ENCODE measurements at regions of chr3 and their contacts with region 1.

Region 1: DNA sequence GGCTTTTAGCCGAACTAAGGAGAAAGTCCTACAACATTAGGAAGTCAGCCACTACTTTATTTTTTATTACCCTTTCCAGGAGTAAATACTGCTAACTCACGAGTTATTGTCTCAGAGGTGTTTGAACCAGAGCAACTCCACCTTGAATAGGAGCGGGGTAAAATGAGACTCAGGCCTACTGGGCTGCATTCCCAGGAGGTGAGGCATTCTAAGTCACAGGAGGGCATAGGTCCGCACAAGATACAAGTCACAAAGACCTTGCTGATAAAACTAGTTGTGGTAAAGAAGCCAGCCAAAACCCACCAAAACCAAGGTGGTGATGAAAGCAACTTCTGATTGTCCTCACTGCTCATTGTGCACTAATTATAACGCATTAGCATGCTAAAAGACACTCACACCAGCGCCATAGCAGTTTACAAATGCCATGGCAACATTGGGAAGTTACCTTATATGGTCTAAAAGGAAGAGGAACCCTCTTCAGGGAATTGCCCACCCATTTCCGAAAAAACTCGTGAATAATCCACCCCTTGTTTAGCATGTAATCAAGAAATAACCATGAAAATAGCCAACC is 555.9 kb downstream of the IGSF11 start:
- DNase-seq: no peak
- ATAC-seq: no peak
- H3K4me3 ChIP-seq: no peak overlapping the region
- H3K27ac ChIP-seq: no peak overlapping the region
- H3K4me1 ChIP-seq: no peaks in the 10 kb centered on the region
- H3K27me3 ChIP-seq: no peaks in the 10 kb centered on the region
- CTCF ChIP-seq: no peak
- POLR2A ChIP-seq: no peak

Region 2: DNA sequence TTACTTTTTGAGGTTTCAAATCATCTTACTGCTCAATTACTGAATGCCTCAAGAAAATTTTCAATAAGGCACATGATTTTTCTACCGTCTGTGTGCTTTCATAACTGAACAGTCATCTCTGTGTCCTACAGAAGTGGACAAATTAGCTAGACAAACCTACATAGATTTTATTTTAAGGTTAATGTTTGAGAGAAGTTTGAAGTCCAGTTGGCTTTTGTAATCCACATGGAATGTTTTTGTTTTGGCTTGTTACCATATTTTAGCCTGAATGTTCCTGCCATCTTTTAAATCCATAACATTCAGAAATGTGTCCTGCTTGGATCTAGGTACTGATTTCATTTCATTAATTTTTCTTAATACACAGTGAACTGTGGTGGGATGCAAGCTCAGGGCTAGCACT is 174.2 kb before region 1 on chr3:
- intact Hi-C with region 1: loop called in 1 of 10 experiments (anchors 5 kb)
- DNase-seq: no peak
- ATAC-seq: no peak
- H3K4me3 ChIP-seq: no peak overlapping the region
- H3K27ac ChIP-seq: no peak overlapping the region
- H3K4me1 ChIP-seq: no peaks in the 10 kb centered on the region
- H3K27me3 ChIP-seq: no peaks in the 10 kb centered on the region
- CTCF ChIP-seq: no peak
- POLR2A ChIP-seq: no peak

Measured in heart left ventricle (tissue), 16 donors.